MCF 10A (cell line): ENCODE measurements at regions of chr11 and their contacts with region 1.

Region 1: DNA sequence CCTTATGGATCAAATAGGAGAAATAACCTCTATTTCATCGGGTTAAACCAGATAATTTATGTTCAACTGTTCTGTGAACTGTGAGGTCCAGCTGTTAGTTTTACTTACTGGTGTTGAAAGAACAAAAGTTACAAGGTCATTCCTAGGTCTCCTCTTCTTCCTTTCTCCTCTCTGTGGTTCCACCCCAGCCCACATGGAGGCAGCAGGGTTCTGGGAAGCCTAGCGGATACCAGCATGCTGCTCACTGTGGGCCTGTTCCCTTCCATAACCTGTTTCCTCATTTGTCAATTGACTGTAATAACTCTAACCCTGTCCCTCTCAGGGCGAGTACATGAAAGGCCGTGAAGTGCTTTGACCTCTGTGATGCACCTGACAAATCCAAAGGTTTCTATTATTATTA is 27.8 kb downstream of the RELT start:
- DNase-seq: peak; percentile 49
- H3K4me3 Mint-ChIP-seq: no peak overlapping the region
- H3K27ac Mint-ChIP-seq: no peak overlapping the region
- H3K4me1 Mint-ChIP-seq: no peaks in the 10 kb centered on the region
- H3K27me3 Mint-ChIP-seq: no peaks in the 10 kb centered on the region
- CTCF ChIP-seq: peak; percentile 55

Region 2: DNA sequence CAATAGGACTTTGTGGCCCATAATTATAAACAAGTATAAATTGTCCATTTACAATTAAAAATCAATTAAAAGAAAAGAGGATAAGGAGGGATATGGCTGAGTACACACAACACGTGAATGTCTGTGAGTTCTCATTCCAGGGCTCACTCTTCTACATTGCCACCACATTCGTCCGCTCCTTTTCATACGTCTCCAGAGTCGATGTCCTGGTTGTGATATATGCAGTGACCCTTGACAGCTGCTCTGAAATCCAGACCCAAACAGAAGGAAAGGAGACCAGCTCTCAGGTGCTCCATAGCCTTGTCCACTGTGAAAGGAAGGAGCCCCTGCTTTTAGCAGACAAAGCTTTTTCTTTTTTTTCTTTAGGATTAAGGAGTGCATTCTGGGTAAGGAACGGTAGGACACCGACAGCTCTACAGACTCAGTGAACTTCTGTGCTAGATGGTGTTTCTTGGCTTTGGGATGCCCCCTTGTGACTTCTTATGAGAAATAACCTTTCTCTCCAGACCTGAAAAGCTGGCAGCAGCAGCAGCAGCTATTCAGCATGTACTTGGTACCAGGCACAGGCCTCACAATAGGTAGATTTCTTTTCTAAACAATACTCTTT is 527.1 kb after region 1 on chr11:
- CTCF ChIA-PET with region 1: no interaction called
- POLR2A ChIA-PET with region 1: no interaction called
- intact Hi-C with region 1: loop called (anchors 5 kb)
- DNase-seq: peak; percentile 70
- H3K4me3 Mint-ChIP-seq: no peak overlapping the region
- H3K27ac Mint-ChIP-seq: no peak overlapping the region
- H3K4me1 Mint-ChIP-seq: no peaks in the 10 kb centered on the region
- H3K27me3 Mint-ChIP-seq: no peaks in the 10 kb centered on the region
- CTCF ChIP-seq: peak; percentile 40

Region 3: GRCh38 chr11:74371279-74372049 is 967.4 kb after region 1 on chr11:
- CTCF ChIA-PET with region 1: no interaction called
- POLR2A ChIA-PET with region 1: no interaction called
- intact Hi-C with region 1: no loop called
- DNase-seq: peak; percentile 54
- H3K4me3 Mint-ChIP-seq: no peak overlapping the region
- H3K27ac Mint-ChIP-seq: peak overlapping the region; percentile 55
- H3K4me1 Mint-ChIP-seq: peaks cover 5% of the 10 kb centered on the region
- H3K27me3 Mint-ChIP-seq: no peaks in the 10 kb centered on the region
- CTCF ChIP-seq: no peak